B cell (primary cell): ENCODE measurements at regions of chr2 and their contacts with region 1.

Region 1: GRCh38 chr2:227460070-227460485 is 11.9 kb upstream of the AGFG1 start:
- DNase-seq: peak; percentile 36
- ATAC-seq: peak; percentile 79
- H3K4me3 ChIP-seq: no peak overlapping the region
- H3K4me3 Mint-ChIP-seq: peak overlapping the region; percentile 50
- H3K27ac ChIP-seq: no peak overlapping the region
- H3K27ac Mint-ChIP-seq: peak overlapping the region; percentile 27
- H3K4me1 ChIP-seq: peaks cover 52 to 54% of the 10 kb centered on the region in 2 donors
- H3K4me1 Mint-ChIP-seq: peaks cover 66% of the 10 kb centered on the region
- H3K27me3 ChIP-seq: no peaks in the 10 kb centered on the region
- H3K27me3 Mint-ChIP-seq: no peaks in the 10 kb centered on the region
- CTCF ChIP-seq: no peak

Region 2: GRCh38 chr2:227411320-227411989 is 48.6 kb before region 1 on chr2:
- CTCF ChIA-PET with region 1: interaction called, 5 read pairs
- POLR2A ChIA-PET with region 1: no interaction called
- intact Hi-C with region 1: loop called (anchors 5 kb)
- DNase-seq: peak; percentile 57
- ATAC-seq: peak; percentile 72
- H3K4me3 ChIP-seq: peak overlapping the region in 1 of 5 experiments; percentile 19
- H3K4me3 Mint-ChIP-seq: peak overlapping the region; percentile 63
- H3K27ac ChIP-seq: peak overlapping the region in 1 of 2 donors; percentile 60
- H3K27ac Mint-ChIP-seq: peak overlapping the region; percentile 60
- H3K4me1 ChIP-seq: peaks cover 33 to 36% of the 10 kb centered on the region in 2 donors
- H3K4me1 Mint-ChIP-seq: peaks cover 41% of the 10 kb centered on the region
- H3K27me3 ChIP-seq: no peaks in the 10 kb centered on the region
- H3K27me3 Mint-ChIP-seq: no peaks in the 10 kb centered on the region
- CTCF ChIP-seq: no peak